ENCODE measurements at regions of chr13 and their contacts with region 1.

Region 1: GRCh38 chr13:96141027-96141426 is 51.1 kb downstream of the HS6ST3 start:
- DNase-seq: no peak
- H3K4me3 ChIP-seq: no peak overlapping the region
- H3K27ac ChIP-seq: no peak overlapping the region
- H3K27me3 ChIP-seq: no peaks in the 10 kb centered on the region
- CTCF ChIP-seq: peak in 44 of 56 donors; percentile 15 to 64 (median 34)

Region 2: GRCh38 chr13:95207769-95208366 is 933.2 kb before region 1 on chr13:
- intact Hi-C with region 1: no loop called
- DNase-seq: no peak
- H3K4me3 ChIP-seq: no peak overlapping the region
- H3K27ac ChIP-seq: no peak overlapping the region
- H3K27me3 ChIP-seq: peaks cover 0 to 3% (median 0%) of the 10 kb centered on the region in 45 donors
- CTCF ChIP-seq: no peak

Region 3: GRCh38 chr13:96112927-96113326 is 28.1 kb before region 1 on chr13:
- intact Hi-C with region 1: no loop called
- DNase-seq: no peak
- H3K4me3 ChIP-seq: no peak overlapping the region
- H3K27ac ChIP-seq: no peak overlapping the region
- H3K27me3 ChIP-seq: no peaks in the 10 kb centered on the region
- CTCF ChIP-seq: no peak

Region 4: GRCh38 chr13:96809366-96810096 is 668.5 kb after region 1 on chr13:
- intact Hi-C with region 1: loop called in 1 of 2 experiments (anchors 10 kb)
- DNase-seq: no peak
- H3K4me3 ChIP-seq: no peak overlapping the region
- H3K27ac ChIP-seq: no peak overlapping the region
- H3K27me3 ChIP-seq: no peaks in the 10 kb centered on the region
- CTCF ChIP-seq: no peak